AG04450 (cell line): ENCODE measurements at regions of chr12 and their contacts with region 1.

Region 1: GRCh38 chr12:13044002-13044905 is at the start of gene FAM234B:
- DNase-seq: no peak
- H3K4me3 ChIP-seq: peak within 1 kb of the TSS; percentile 96
- H3K27ac ChIP-seq: no peak within 1 kb of the TSS
- H3K27me3 ChIP-seq: no peaks in the 10 kb centered on the region
- CTCF ChIP-seq: peak; percentile 6; the same call in 1 of the 2 replicates
- polyA plus RNA-seq, gene FAM234B: 6.1 and 7.3 TPM in 2 replicates

Region 2: DNA sequence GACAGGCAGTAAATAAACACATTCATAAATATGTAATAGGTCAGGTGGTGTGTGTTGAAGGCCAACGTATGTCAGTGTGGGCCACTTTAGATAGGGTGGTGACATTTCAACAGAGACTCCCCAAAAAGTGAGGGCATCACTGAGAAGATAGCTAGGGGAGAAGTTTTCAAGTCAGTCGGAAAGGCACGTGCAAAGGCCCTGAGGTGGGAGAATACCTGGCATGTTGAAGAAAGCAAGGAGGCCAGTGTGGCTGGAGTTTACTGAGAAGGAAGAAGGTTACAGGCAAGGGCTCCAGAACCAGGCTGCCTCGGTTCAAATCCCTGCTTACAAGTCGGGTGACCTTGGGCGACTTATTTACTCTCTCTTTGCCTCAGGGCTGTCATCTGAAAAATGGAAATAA is 33.2 kb before region 1 on chr12:
- CTCF ChIA-PET with region 1: no interaction called
- POLR2A ChIA-PET with region 1: no interaction called
- DNase-seq: no peak
- H3K4me3 ChIP-seq: no peak overlapping the region
- H3K27ac ChIP-seq: no peak overlapping the region
- H3K27me3 ChIP-seq: no peaks in the 10 kb centered on the region
- CTCF ChIP-seq: no peak

Region 3: GRCh38 chr12:13023811-13024530 is 20.3 kb before region 1 on chr12:
- CTCF ChIA-PET with region 1: interaction called, 18 read pairs
- POLR2A ChIA-PET with region 1: no interaction called
- DNase-seq: no peak
- H3K4me3 ChIP-seq: no peak overlapping the region
- H3K27ac ChIP-seq: no peak overlapping the region
- H3K27me3 ChIP-seq: no peaks in the 10 kb centered on the region
- CTCF ChIP-seq: peak; percentile 46